ENCODE measurements at regions of chr1 and their contacts with region 1.

Region 1: DNA sequence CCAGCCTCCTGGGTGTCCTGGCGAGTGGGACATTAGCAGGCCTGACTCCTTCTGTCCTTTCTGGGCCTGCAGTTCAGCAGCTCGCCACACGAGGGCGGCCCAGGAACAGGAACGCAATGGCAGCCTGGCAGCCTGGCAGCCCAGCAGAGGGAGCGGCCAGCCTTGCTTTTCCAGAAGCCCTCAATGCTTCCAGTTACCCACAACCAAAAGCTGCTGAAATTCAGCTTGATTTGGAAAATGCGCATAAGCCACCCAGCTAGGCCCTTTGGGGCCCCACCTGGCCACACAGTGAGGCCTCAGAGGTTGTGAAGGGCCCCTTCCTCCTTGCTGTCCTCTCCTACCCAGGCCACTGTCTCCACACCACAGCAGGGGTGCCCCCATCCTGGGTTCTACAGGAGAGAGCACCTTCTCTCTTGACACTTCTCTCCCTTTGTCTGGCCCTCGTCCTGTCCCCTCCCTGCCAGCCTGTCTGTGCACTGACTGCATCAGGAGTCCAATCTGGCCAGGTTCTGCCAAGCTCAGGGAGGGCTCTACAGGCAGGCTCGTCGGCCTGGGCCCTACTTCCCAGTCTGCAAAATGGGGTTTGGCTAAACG is 103.4 kb upstream of the VAMP3 start:
- DNase-seq: peak; percentile 87
- CTCF ChIP-seq: peak; percentile 100

Region 2: GRCh38 chr1:7646981-7647901 is 20.5 kb before region 1 on chr1:
- CTCF ChIA-PET with region 1: interaction called, 36 read pairs
- POLR2A ChIA-PET with region 1: no interaction called
- DNase-seq: peak; percentile 89
- CTCF ChIP-seq: peak; percentile 98

Region 3: DNA sequence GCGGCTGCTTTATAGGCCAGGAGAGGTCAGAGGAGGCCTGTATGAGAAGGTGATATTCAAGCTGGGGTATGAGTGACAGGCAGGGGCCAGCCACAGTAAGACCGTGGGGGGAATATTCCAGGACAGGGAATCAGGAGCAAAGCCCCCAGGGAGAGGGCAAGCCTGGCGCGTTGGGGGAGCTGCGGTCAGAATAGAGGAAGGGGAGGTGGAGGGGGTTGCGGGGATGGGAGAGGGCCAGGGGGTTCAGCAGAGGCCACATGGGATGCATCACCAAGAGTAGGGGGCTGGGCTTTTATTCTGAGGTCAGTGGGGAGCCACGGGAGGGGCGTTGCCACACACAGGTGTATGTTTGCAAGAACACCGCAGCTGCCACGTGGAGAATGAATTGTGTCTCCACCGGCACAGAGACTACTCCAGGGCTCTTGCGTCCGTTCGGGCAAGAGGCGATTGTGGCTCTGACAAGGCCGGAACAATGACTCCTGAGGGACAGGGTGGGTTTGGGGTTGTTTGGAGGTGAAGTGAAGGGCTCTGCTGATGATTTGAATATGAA is 18.7 kb after region 1 on chr1:
- CTCF ChIA-PET with region 1: interaction called, 92 read pairs
- POLR2A ChIA-PET with region 1: no interaction called
- DNase-seq: no peak
- CTCF ChIP-seq: no peak

Region 4: DNA sequence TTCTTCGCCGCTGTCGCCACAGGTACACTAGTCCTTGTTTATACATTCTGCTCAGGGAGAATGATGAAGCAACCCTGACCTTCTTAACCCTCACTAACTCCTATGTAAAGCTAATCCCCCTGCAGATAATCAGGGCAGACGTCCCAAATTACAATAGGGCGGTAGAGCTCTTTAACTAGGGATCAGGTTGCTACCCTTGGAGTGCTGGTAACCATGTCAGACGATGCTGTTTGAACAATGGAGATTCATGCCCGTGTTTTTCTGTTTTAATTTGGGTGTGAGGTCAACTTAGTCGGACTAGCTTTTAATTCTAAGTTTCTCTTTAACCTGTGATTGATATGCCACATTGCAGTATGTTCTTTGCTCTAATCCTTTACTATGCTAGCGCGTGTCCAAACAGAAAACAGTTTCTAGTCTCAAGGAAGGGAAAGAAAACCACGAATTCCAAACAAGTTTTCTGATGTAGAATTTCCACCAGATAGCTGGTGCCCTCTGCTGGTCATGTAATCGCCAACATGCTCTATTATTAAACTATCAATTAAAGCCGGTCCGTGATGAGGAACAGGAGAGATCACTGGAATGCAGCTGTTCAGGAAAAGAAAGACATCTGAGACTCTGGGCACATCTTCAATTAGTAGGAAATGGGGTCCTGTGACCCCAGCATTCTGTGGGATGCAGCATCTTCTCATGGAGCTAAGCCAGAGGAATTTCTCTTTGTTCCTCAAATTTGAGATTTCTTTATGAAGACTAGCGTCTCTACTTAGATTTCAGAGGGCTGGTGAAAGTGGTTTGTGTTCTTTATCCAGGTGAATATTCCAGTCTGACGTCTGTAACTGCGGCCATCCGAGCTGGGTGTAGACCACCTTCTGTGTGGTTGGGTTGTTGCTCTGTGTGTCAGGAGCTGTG is 85.0 kb after region 1 on chr1:
- CTCF ChIA-PET with region 1: interaction called, 296 read pairs
- POLR2A ChIA-PET with region 1: no interaction called
- DNase-seq: peak; percentile 37
- CTCF ChIP-seq: peak; percentile 74

Region 5: GRCh38 chr1:7902478-7903085 is 234.9 kb after region 1 on chr1:
- CTCF ChIA-PET with region 1: interaction called, 50 read pairs
- POLR2A ChIA-PET with region 1: no interaction called
- DNase-seq: peak; percentile 77
- CTCF ChIP-seq: peak; percentile 80